Naive thymus-derived CD4-positive, alpha-beta T cell (primary cell): ENCODE measurements at regions of chr3 and their contacts with region 1.

Region 1: DNA sequence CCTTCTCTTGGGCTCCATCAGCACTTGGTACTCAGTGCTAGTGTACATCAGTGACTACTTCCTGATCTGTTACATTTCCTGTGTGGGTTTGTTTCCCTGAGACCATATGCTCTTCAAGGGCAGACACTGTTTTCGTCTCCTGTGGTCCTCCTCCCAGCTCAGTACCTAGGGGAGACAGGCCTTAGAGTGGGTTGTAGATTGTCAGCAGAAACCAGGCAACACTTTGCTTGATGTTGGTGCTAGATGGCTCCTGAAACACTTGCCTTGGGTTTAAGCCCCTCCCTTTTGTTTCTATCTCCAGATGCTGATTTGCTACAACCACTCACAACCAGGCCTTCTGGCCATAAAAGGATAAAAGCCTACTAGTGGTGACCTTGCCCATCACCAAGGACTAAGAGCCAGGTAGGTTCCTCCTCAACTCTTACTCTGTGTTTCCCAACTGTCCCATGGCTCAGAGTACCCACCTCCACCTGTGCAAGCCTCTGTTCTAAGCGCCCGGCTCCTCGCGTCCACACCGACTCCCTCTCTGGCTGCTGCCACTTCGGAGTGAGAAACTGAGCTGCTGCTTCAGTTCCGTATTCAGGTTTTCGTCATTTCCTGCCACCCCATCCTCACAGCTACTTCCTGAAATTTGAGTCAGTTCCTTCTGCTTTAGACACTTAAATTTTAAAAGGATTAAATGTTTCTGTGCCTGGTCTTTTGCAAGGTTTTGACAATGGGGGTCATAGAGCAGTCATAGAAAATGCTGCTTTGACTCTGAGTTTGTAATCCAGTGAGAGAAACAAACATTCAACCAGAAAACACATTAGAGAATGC is at the start of gene HCLS1:
- DNase-seq: peak; percentile 60 to 87 (median 79)
- ATAC-seq: peak; percentile 87
- H3K4me3 ChIP-seq: peak within 1 kb of the TSS; percentile 90
- H3K4me3 Mint-ChIP-seq: peak within 1 kb of the TSS; percentile 82 to 99 (median 95)
- H3K27ac ChIP-seq: peak within 1 kb of the TSS; percentile 90
- H3K27ac Mint-ChIP-seq: peak within 1 kb of the TSS; percentile 96 to 100 (median 99)
- H3K4me1 ChIP-seq: peaks cover 34 to 41% of the 10 kb centered on the region in 2 donors
- H3K4me1 Mint-ChIP-seq: peaks cover 41 to 68% (median 57%) of the 10 kb centered on the region in 7 donors
- H3K27me3 ChIP-seq: no peaks in the 10 kb centered on the region
- H3K27me3 Mint-ChIP-seq: no peaks in the 10 kb centered on the region
- total RNA-seq, gene HCLS1: 275 to 357 (median 311) TPM

Region 2: GRCh38 chr3:121718205-121718846 is 57.8 kb after region 1 on chr3:
- CTCF ChIA-PET with region 1: no interaction called
- POLR2A ChIA-PET with region 1: interaction called, 4 read pairs
- intact Hi-C with region 1: loop called (anchors 1 to 2 kb)
- DNase-seq: peak in 7 of 9 donors; percentile 37 to 70 (median 58)
- ATAC-seq: peak; percentile 88
- H3K4me3 ChIP-seq: peak overlapping the region; percentile 15
- H3K4me3 Mint-ChIP-seq: peak overlapping the region; percentile 3 to 80 (median 48)
- H3K27ac ChIP-seq: peak overlapping the region; percentile 47
- H3K27ac Mint-ChIP-seq: peak overlapping the region; percentile 63 to 97 (median 90)
- H3K4me1 ChIP-seq: peaks cover 0 to 7% of the 10 kb centered on the region in 2 donors
- H3K4me1 Mint-ChIP-seq: peaks cover 13 to 37% (median 22%) of the 10 kb centered on the region in 7 donors
- H3K27me3 ChIP-seq: no peaks in the 10 kb centered on the region
- H3K27me3 Mint-ChIP-seq: no peaks in the 10 kb centered on the region

Region 3: GRCh38 chr3:122793568-122794416 is 1133.2 kb after region 1 on chr3 and contains the start of gene HSPBAP1:
- CTCF ChIA-PET with region 1: no interaction called
- POLR2A ChIA-PET with region 1: interaction called, 3 read pairs
- intact Hi-C with region 1: loop called (anchors 2 to 10 kb)
- DNase-seq: peak; percentile 71 to 90 (median 86)
- ATAC-seq: peak; percentile 77
- H3K4me3 ChIP-seq: peak within 1 kb of the TSS; percentile 83
- H3K4me3 Mint-ChIP-seq: peak within 1 kb of the TSS in 5 of 10 donors; percentile 91 to 97 (median 95)
- H3K27ac ChIP-seq: peak within 1 kb of the TSS; percentile 82
- H3K27ac Mint-ChIP-seq: peak within 1 kb of the TSS in 6 of 9 donors; percentile 79 to 99 (median 96)
- H3K4me1 ChIP-seq: peaks cover 22 to 34% of the 10 kb centered on the region in 2 donors
- H3K4me1 Mint-ChIP-seq: peaks cover 20 to 29% (median 27%) of the 10 kb centered on the region in 7 donors
- H3K27me3 ChIP-seq: no peaks in the 10 kb centered on the region
- H3K27me3 Mint-ChIP-seq: no peaks in the 10 kb centered on the region
- total RNA-seq, gene HSPBAP1: 9.0 to 31.5 (median 23.3) TPM